ENCODE measurements at regions of chr13 and their contacts with region 1.

Region 1: GRCh38 chr13:26929971-26930730 is 169.6 kb upstream of the GPR12 start:
- DNase-seq: peak; percentile 56 to 58
- ATAC-seq: peak; percentile 84 to 94
- H3K4me3 ChIP-seq: no peak overlapping the region
- H3K27ac ChIP-seq: no peak overlapping the region
- H3K4me1 ChIP-seq: no peaks in the 10 kb centered on the region
- CTCF ChIP-seq: peak; percentile 73
- EP300 ChIP-seq: no peak
- POLR2A ChIP-seq: no peak
- RAD21 ChIP-seq: peak; percentile 69 to 71

Region 2: GRCh38 chr13:26707122-26708006 is 222.8 kb before region 1 on chr13:
- CTCF ChIA-PET with region 1: interaction called, 18 read pairs
- POLR2A ChIA-PET with region 1: no interaction called
- DNase-seq: peak; percentile 14 to 51
- ATAC-seq: peak; percentile 91 to 93
- H3K4me3 ChIP-seq: no peak overlapping the region
- H3K27ac ChIP-seq: no peak overlapping the region
- H3K4me1 ChIP-seq: no peaks in the 10 kb centered on the region
- CTCF ChIP-seq: peak; percentile 37
- EP300 ChIP-seq: no peak
- POLR2A ChIP-seq: no peak
- RAD21 ChIP-seq: peak; percentile 48 to 67; a peak in 4 of 5 replicates

Region 3: GRCh38 chr13:26813321-26813979 is 116.7 kb before region 1 on chr13:
- CTCF ChIA-PET with region 1: no interaction called
- POLR2A ChIA-PET with region 1: no interaction called
- DNase-seq: no peak
- ATAC-seq: no peak
- H3K4me3 ChIP-seq: no peak overlapping the region
- H3K27ac ChIP-seq: no peak overlapping the region
- H3K4me1 ChIP-seq: no peaks in the 10 kb centered on the region
- CTCF ChIP-seq: no peak
- EP300 ChIP-seq: no peak
- POLR2A ChIP-seq: no peak
- RAD21 ChIP-seq: no peak

Region 4: DNA sequence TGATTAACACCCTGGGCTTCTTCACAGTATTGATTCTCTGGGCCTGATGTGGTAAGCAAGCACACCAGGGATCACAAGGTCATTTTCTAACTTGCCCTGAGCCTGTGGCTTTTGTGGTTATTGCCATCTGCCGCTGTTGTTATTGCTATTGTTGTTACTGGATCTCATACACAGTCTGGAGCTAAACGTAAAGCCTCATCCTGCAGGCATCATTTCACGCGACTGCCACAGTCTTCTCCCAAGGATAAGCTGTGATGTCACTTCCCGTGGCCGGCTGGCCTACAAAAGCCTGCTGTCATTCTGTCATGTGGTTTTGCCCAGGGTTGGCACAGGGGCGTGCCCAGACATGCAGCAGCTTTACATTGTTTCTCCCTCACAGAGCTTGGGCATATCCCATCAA is 15.5 kb before region 1 on chr13:
- CTCF ChIA-PET with region 1: interaction called, 28 read pairs
- POLR2A ChIA-PET with region 1: no interaction called
- DNase-seq: no peak
- ATAC-seq: no peak
- H3K4me3 ChIP-seq: no peak overlapping the region
- H3K27ac ChIP-seq: no peak overlapping the region
- H3K4me1 ChIP-seq: no peaks in the 10 kb centered on the region
- CTCF ChIP-seq: no peak
- EP300 ChIP-seq: no peak
- POLR2A ChIP-seq: no peak
- RAD21 ChIP-seq: no peak

Region 5: GRCh38 chr13:26941345-26942174 is 11.4 kb after region 1 on chr13:
- CTCF ChIA-PET with region 1: interaction called, 18 read pairs
- POLR2A ChIA-PET with region 1: no interaction called
- DNase-seq: no peak
- ATAC-seq: peak; percentile 48 to 74; a peak in 5 of 6 replicates
- H3K4me3 ChIP-seq: no peak overlapping the region
- H3K27ac ChIP-seq: no peak overlapping the region
- H3K4me1 ChIP-seq: no peaks in the 10 kb centered on the region
- CTCF ChIP-seq: no peak
- EP300 ChIP-seq: no peak
- POLR2A ChIP-seq: no peak
- RAD21 ChIP-seq: no peak

Measured in A549 (cell line).